Activated naive CD4-positive, alpha-beta T cell treated with anti-CD3 and anti-CD28 coated beads for 36 hours (primary cell): ENCODE measurements at regions of chr21 and their contacts with region 1.

Region 1: GRCh38 chr21:45167796-45168222 is 93.4 kb downstream of the ADARB1 start:
- DNase-seq: no peak
- H3K4me3 Mint-ChIP-seq: no peak overlapping the region
- H3K27ac Mint-ChIP-seq: no peak overlapping the region
- H3K4me1 Mint-ChIP-seq: peaks cover 23% of the 10 kb centered on the region
- H3K27me3 Mint-ChIP-seq: no peaks in the 10 kb centered on the region

Region 2: DNA sequence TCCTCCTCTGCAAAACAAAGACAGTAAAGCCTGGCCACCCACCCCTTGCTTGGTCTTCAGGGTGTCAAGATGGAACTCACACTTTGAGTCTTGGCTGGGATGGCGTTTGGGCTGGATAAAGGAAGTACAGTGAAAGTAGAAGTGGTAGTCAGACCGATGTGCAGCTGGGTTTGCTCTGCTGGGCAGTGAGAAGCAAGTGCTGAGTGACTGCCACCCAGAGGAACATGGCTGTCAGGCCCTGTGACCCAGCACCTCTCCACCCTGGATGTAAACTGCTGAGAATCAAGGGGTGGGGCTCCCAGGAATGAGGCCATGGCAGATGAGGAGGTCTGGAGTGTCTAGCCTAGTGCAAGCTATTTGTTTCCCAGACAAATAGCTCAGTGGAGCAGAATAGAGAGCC is 68.7 kb after region 1 on chr21:
- CTCF ChIA-PET with region 1: no interaction called
- intact Hi-C with region 1: loop called (anchors 10 kb)
- DNase-seq: no peak
- H3K4me3 Mint-ChIP-seq: no peak overlapping the region
- H3K27ac Mint-ChIP-seq: no peak overlapping the region
- H3K4me1 Mint-ChIP-seq: no peaks in the 10 kb centered on the region
- H3K27me3 Mint-ChIP-seq: peaks cover 24% of the 10 kb centered on the region